ENCODE measurements at regions of chr10 and their contacts with region 1.

Region 1: GRCh38 chr10:17029581-17030271 is 99.9 kb downstream of the CUBN start:
- DNase-seq: peak; percentile 97
- H3K4me3 ChIP-seq: peak overlapping the region; percentile 8
- H3K27ac ChIP-seq: peak overlapping the region; percentile 84
- H3K4me1 ChIP-seq: peaks cover 69% of the 10 kb centered on the region
- H3K27me3 ChIP-seq: no peaks in the 10 kb centered on the region
- CTCF ChIP-seq: no peak

Region 2: DNA sequence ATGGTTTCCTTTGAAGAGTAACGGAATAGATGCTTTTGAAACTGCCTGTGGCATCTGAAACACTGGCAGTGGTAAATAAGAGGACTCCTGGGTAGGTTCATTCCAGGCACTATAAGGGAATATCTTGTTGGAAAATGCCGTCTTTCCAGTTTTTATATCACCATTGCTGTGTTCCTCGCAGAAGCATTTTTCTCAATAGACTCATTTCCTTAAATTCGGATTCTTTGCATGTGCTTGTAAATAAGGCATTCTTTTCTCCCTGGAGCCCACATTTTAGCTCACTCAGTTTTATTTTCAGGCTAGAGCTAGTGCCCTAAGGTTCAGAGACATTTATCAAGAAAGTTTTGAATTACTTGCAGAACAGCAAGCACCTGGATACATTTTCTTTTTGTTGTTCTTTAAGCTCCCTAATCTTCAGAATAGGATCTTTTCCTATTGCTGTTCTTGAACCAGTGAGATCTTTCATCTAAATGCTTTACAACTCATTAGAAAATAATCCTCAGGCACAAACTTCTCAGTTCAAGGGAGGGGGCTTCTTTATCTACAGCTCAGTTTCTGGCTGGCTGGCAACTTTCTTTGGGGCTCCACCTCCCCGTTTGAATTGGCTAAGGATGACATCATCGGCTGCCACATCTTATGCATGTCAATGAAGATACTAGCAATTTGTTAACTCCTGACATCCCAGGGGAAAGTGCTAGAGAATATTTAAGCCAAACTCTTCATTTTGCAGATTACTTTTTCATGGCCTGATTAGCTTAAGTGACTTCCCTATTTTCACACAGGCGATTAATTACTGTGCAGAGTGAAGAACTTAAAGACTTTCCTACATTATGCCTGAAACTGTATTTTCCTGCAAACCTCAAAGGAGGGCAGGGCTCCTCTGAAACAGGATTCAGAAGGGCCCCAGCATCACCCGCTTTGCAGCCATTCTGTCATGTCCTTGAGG is 78.8 kb before region 1 on chr10:
- CTCF ChIA-PET with region 1: no interaction called
- POLR2A ChIA-PET with region 1: no interaction called
- intact Hi-C with region 1: loop called (anchors 5 kb)
- DNase-seq: peak; percentile 94
- H3K4me3 ChIP-seq: no peak overlapping the region
- H3K27ac ChIP-seq: peak overlapping the region; percentile 62
- H3K4me1 ChIP-seq: peaks cover 38% of the 10 kb centered on the region
- H3K27me3 ChIP-seq: no peaks in the 10 kb centered on the region
- CTCF ChIP-seq: no peak

Region 3: GRCh38 chr10:17067376-17068264 is 37.9 kb after region 1 on chr10:
- CTCF ChIA-PET with region 1: no interaction called
- POLR2A ChIA-PET with region 1: no interaction called
- intact Hi-C with region 1: loop called (anchors 5 kb)
- DNase-seq: peak; percentile 87
- H3K4me3 ChIP-seq: peak overlapping the region; percentile 12
- H3K27ac ChIP-seq: peak overlapping the region; percentile 80
- H3K4me1 ChIP-seq: peaks cover 77% of the 10 kb centered on the region
- H3K27me3 ChIP-seq: no peaks in the 10 kb centered on the region
- CTCF ChIP-seq: no peak

Region 4: DNA sequence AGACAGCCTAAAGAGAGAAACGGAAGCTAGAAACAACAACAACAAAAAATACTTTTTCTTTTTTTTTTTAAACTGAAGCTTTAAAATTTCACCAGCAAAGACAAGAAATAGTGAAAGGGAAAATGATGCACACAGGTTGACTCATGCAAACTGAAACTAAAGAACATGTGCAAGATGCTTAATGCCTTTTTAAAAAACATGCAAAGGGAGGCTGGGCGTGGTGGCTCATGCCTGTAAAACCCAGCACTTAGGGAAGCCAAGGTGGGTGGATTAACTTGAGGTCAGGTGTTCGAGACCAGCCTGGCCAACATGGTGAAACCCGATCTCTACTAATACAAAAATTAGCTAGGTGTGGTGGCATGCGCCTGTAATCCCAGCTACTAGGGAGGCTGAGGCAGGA is 115.0 kb after region 1 on chr10:
- CTCF ChIA-PET with region 1: no interaction called
- POLR2A ChIA-PET with region 1: no interaction called
- intact Hi-C with region 1: no loop called
- DNase-seq: no peak
- H3K4me3 ChIP-seq: no peak overlapping the region
- H3K27ac ChIP-seq: no peak overlapping the region
- H3K4me1 ChIP-seq: peaks cover 4% of the 10 kb centered on the region
- H3K27me3 ChIP-seq: no peaks in the 10 kb centered on the region
- CTCF ChIP-seq: no peak

Measured in A673 (cell line).